HEK293 (cell line): ENCODE measurements at regions of chr2 and their contacts with region 1.

Region 1: DNA sequence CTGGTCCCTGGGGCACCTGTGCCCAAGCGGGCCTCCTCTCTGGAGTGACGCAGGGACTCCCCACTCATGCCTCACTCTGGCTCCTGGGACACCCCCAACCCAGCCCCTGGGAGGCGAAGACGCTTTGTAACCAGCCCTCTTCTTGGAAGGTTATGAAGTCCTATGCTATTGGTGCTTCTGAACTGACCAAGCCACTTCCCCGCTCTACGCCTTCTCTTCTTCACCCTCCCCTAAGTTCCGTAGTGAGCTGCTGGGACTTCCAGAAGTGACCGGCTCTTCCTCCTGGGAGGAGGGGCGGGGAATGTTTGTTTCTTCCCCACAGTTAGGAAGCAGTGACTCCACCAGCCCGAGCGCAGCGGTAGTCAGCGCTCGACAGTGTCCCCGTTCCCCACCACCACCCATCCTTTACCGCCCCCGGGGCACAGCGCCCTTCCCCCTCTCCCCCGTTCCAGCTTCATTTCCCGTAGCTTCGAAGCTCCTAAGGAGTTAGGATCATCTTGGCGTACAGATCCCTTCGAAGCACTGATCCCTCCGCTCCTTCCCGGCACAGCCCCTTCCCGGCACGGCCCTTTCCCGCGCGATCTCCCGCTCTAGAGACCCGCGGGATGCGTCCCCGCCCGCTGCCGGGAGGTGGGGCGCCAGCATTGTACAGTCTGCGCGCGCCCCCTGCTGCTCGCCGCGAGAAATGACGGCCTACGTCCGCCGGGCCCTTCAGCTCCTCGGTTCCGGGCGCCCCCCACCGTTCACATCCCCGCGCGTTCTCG is 25.3 kb upstream of the NOTO start:
- H3K4me3 ChIP-seq: peak overlapping the region; percentile 26
- H3K27ac ChIP-seq: no peak overlapping the region
- H3K4me1 ChIP-seq: peaks cover 3% of the 10 kb centered on the region; the same call in 1 of the 2 replicates
- CTCF ChIP-seq: peak; percentile 100

Region 2: DNA sequence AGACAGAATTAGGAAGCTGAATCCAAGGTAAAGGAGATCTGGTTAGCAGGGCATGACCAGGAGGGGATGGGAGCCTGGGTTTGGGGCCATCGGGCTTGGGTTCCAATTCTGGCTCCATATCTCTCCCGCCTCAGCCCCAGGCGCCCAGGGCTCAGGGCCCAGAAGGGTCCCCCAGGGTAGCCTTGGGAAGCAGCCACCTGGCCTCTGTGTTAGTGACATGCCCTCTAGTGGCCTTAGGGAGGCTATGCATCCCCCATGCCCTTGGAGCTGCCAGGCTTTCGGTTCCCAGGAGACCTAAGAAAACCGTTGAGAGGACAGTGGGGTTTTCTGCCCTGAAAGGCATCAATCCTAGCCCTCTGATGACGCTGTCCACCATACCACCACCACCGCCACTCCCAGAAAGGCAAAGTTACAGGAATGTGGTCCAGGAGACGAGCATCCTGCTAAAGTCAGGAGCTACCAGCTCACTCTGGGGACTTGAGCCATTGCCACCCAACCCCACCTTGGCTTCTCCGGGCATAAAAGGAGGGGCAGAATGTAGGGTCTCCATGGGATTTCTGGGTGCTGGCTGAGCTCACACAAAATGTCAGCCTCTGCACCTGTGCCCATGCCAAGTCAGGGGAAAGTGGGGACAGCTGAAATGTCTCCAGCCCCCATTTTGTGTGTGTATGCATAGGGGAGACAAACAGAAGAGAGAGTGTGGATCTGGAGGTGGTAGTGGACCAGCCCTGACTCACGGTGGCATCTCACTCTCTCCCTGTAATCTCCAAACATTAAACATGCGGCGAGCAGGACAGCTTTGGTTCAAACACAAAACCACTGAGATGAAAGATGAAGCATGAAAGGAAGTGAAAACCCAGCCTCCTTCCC is 203.3 kb before region 1 on chr2:
- CTCF ChIA-PET with region 1: interaction called, 13 read pairs
- POLR2A ChIA-PET with region 1: no interaction called
- H3K4me3 ChIP-seq: no peak overlapping the region
- H3K27ac ChIP-seq: no peak overlapping the region
- H3K4me1 ChIP-seq: no peaks in the 10 kb centered on the region
- CTCF ChIP-seq: peak; percentile 68

Region 3: DNA sequence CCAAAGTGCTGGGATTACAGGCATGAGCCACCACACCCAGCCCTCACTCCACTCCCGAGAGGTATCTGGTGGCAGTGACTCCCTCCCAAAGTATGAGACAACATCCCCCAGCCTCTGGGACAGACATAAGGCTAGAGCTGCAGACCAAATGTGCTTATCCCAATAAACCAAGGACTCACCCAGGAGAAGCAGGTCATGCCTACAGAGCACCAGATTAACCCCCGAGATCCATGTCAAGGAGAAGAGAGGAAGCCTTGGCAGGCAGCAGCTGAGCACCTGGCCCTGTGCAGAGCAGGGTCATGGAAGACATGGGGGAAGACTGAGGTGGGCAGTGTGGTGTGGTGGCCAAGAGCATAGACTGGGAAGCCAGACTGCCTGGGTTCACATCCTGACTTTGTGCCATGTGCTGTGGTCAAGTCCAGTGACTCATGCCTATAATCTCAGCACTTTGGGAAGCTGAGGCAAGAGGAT is 71.5 kb before region 1 on chr2:
- CTCF ChIA-PET with region 1: interaction called, 10 read pairs
- POLR2A ChIA-PET with region 1: no interaction called
- H3K4me3 ChIP-seq: no peak overlapping the region
- H3K27ac ChIP-seq: no peak overlapping the region
- H3K4me1 ChIP-seq: peaks cover 13% of the 10 kb centered on the region
- CTCF ChIP-seq: no peak

Region 4: DNA sequence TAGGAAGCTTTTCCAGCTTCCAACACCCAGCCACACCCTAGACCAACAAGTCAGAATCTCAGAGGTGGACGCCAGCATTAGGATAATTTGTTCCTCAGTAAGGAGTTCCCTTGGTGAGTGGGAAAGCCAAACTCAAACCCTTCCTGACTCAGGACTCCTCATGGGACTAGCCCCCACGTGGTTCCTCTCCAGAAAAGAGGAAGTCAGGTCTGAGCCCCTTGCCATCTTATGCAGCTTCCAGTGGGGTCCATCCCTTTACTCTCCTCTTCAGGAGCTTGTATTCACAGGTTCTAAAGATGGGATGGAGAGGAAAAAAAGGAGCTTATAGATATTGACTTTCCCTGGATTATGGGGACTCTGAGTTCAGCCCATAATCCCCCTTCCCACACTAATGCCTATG is 10.5 kb after region 1 on chr2:
- CTCF ChIA-PET with region 1: interaction called, 36 read pairs
- POLR2A ChIA-PET with region 1: no interaction called
- H3K4me3 ChIP-seq: no peak overlapping the region
- H3K27ac ChIP-seq: no peak overlapping the region
- H3K4me1 ChIP-seq: no peaks in the 10 kb centered on the region
- CTCF ChIP-seq: no peak

Region 5: GRCh38 chr2:73212448-73213176 is 35.5 kb after region 1 on chr2:
- CTCF ChIA-PET with region 1: interaction called, 21 read pairs
- POLR2A ChIA-PET with region 1: no interaction called
- H3K4me3 ChIP-seq: no peak overlapping the region
- H3K27ac ChIP-seq: no peak overlapping the region
- H3K4me1 ChIP-seq: no peaks in the 10 kb centered on the region
- CTCF ChIP-seq: peak; percentile 67

Region 6: DNA sequence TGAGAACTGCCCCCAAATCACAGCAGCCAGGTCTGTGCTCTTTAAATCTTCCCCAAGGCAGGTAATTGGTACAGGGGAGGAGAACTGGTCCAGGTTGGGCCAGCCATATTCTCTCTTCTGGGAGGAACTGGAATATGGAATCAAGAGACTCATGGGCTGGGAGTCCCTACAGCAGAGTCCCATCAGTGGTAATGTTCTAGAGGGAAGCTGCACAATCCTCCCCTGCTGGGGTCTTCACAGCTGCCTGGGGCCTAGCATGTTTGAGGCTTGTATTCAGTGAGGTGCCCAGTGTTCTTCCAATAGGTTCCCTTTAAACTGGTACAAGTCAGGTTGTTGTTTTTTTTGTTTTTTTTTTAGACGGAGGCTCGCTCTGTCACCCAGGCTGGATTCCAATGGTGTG is 137.4 kb after region 1 on chr2:
- CTCF ChIA-PET with region 1: no interaction called
- POLR2A ChIA-PET with region 1: no interaction called
- H3K4me3 ChIP-seq: no peak overlapping the region
- H3K27ac ChIP-seq: no peak overlapping the region
- H3K4me1 ChIP-seq: no peaks in the 10 kb centered on the region
- CTCF ChIP-seq: no peak